ENCODE measurements at regions of chr12 and their contacts with region 1.

Region 1: GRCh38 chr12:68040450-68041075 is 51.3 kb downstream of the IFNG-AS1 start:
- DNase-seq: peak; percentile 79
- ATAC-seq: peak; percentile 67
- H3K4me3 ChIP-seq: no peak overlapping the region
- H3K4me3 Mint-ChIP-seq: peak overlapping the region; percentile 1
- H3K27ac ChIP-seq: no peak overlapping the region
- H3K27ac Mint-ChIP-seq: no peak overlapping the region
- H3K4me1 ChIP-seq: peaks cover 11 to 15% of the 10 kb centered on the region in 2 donors
- H3K4me1 Mint-ChIP-seq: peaks cover 20% of the 10 kb centered on the region
- H3K27me3 ChIP-seq: no peaks in the 10 kb centered on the region
- H3K27me3 Mint-ChIP-seq: no peaks in the 10 kb centered on the region
- CTCF ChIP-seq: peak; percentile 99

Region 2: GRCh38 chr12:67943226-67943892 is 97.2 kb before region 1 on chr12:
- CTCF ChIA-PET with region 1: no interaction called
- POLR2A ChIA-PET with region 1: no interaction called
- intact Hi-C with region 1: loop called (anchors 2 kb)
- DNase-seq: peak; percentile 78
- ATAC-seq: peak; percentile 85
- H3K4me3 ChIP-seq: no peak overlapping the region
- H3K4me3 Mint-ChIP-seq: no peak overlapping the region
- H3K27ac ChIP-seq: no peak overlapping the region
- H3K27ac Mint-ChIP-seq: no peak overlapping the region
- H3K4me1 ChIP-seq: peaks cover 5 to 8% of the 10 kb centered on the region in 2 donors
- H3K4me1 Mint-ChIP-seq: peaks cover 4% of the 10 kb centered on the region
- H3K27me3 ChIP-seq: no peaks in the 10 kb centered on the region
- H3K27me3 Mint-ChIP-seq: peaks cover 3% of the 10 kb centered on the region
- CTCF ChIP-seq: peak; percentile 87

Region 3: DNA sequence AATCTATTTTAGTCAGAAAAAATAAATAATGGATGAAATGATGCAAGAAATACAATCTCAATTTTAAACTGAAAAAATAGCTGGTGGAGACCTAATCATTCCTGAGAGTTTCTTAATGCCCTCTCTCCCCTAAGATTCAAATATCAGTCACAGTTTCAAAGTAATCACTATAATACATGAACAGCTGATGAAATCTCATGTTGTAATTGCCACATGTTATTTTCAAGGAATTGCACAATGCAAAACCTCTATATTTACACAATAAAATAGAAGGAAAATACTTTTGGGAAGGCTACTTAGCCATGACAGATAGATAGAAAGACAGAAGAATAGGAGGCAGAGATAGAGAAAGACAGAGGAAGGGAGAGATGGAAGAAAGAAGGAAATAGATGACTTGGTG is 33.1 kb before region 1 on chr12:
- CTCF ChIA-PET with region 1: interaction called, 22 read pairs
- POLR2A ChIA-PET with region 1: interaction called, 4 read pairs
- intact Hi-C with region 1: no loop called
- DNase-seq: no peak
- ATAC-seq: no peak
- H3K4me3 ChIP-seq: no peak overlapping the region
- H3K4me3 Mint-ChIP-seq: no peak overlapping the region
- H3K27ac ChIP-seq: no peak overlapping the region
- H3K27ac Mint-ChIP-seq: no peak overlapping the region
- H3K4me1 ChIP-seq: peaks cover 14 to 15% of the 10 kb centered on the region in 2 donors
- H3K4me1 Mint-ChIP-seq: peaks cover 21% of the 10 kb centered on the region
- H3K27me3 ChIP-seq: no peaks in the 10 kb centered on the region
- H3K27me3 Mint-ChIP-seq: no peaks in the 10 kb centered on the region
- CTCF ChIP-seq: no peak

Region 4: DNA sequence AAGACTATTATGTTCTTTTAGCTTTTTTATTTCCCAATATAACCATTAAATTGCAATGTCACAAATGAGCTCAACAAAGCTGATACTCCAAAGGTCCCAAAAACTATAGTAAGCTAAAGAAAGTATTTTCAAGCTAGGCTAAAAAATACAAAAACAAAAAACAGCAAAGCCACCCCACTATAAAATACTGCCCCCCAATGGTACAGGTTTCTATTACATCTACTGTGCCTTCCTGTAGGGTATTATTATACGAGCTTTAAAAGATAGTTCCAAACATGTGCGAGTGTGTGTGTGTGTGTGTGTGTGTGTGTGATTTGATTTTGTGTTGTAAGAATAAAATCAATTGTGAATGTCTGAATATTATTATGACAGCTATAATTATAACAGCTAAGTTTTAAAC is 117.9 kb after region 1 on chr12:
- CTCF ChIA-PET with region 1: interaction called, 10 read pairs
- POLR2A ChIA-PET with region 1: no interaction called
- intact Hi-C with region 1: loop called (anchors 10 kb)
- DNase-seq: peak; percentile 33
- ATAC-seq: no peak
- H3K4me3 ChIP-seq: no peak overlapping the region
- H3K4me3 Mint-ChIP-seq: no peak overlapping the region
- H3K27ac ChIP-seq: no peak overlapping the region
- H3K27ac Mint-ChIP-seq: no peak overlapping the region
- H3K4me1 ChIP-seq: peaks cover 3 to 5% of the 10 kb centered on the region in 2 donors
- H3K4me1 Mint-ChIP-seq: peaks cover 11% of the 10 kb centered on the region
- H3K27me3 ChIP-seq: no peaks in the 10 kb centered on the region
- H3K27me3 Mint-ChIP-seq: peaks cover 2% of the 10 kb centered on the region
- CTCF ChIP-seq: peak; percentile 43

Region 5: GRCh38 chr12:68317047-68317667 is 276.6 kb after region 1 on chr12:
- CTCF ChIA-PET with region 1: interaction called, 29 read pairs
- POLR2A ChIA-PET with region 1: no interaction called
- intact Hi-C with region 1: loop called (anchors 1 kb)
- DNase-seq: peak; percentile 65
- ATAC-seq: no peak
- H3K4me3 ChIP-seq: no peak overlapping the region
- H3K4me3 Mint-ChIP-seq: no peak overlapping the region
- H3K27ac ChIP-seq: no peak overlapping the region
- H3K27ac Mint-ChIP-seq: no peak overlapping the region
- H3K4me1 ChIP-seq: no peaks in the 10 kb centered on the region
- H3K4me1 Mint-ChIP-seq: no peaks in the 10 kb centered on the region
- H3K27me3 ChIP-seq: no peaks in the 10 kb centered on the region
- H3K27me3 Mint-ChIP-seq: no peaks in the 10 kb centered on the region
- CTCF ChIP-seq: peak; percentile 89